ENCODE measurements at regions of chr6 and their contacts with region 1.

Region 1: GRCh38 chr6:4055420-4056041 is 23.4 kb downstream of the FAM217A start:
- DNase-seq: peak in 1 of 3 donors; percentile 47
- ATAC-seq: peak; percentile 81 to 83
- H3K4me3 ChIP-seq: no peak overlapping the region
- H3K27ac ChIP-seq: no peak overlapping the region
- H3K4me1 ChIP-seq: no peaks in the 10 kb centered on the region
- H3K27me3 ChIP-seq: no peaks in the 10 kb centered on the region

Region 2: GRCh38 chr6:3962957-3963303 is 92.6 kb before region 1 on chr6:
- intact Hi-C with region 1: no loop called
- DNase-seq: no peak
- ATAC-seq: no peak
- H3K4me3 ChIP-seq: no peak overlapping the region
- H3K27ac ChIP-seq: no peak overlapping the region
- H3K4me1 ChIP-seq: no peaks in the 10 kb centered on the region
- H3K27me3 ChIP-seq: no peaks in the 10 kb centered on the region

Region 3: GRCh38 chr6:4102687-4103244 is 47.2 kb after region 1 on chr6:
- intact Hi-C with region 1: no loop called
- DNase-seq: no peak
- ATAC-seq: no peak
- H3K4me3 ChIP-seq: no peak overlapping the region
- H3K27ac ChIP-seq: no peak overlapping the region
- H3K4me1 ChIP-seq: no peaks in the 10 kb centered on the region
- H3K27me3 ChIP-seq: no peaks in the 10 kb centered on the region

Region 4: GRCh38 chr6:4115746-4116145 is 60.2 kb after region 1 on chr6:
- intact Hi-C with region 1: loop called in 1 of 4 experiments (anchors 5 kb)
- DNase-seq: no peak
- ATAC-seq: no peak
- H3K4me3 ChIP-seq: no peak overlapping the region
- H3K27ac ChIP-seq: no peak overlapping the region
- H3K4me1 ChIP-seq: no peaks in the 10 kb centered on the region
- H3K27me3 ChIP-seq: no peaks in the 10 kb centered on the region

Region 5: GRCh38 chr6:4125936-4126864 is 70.7 kb after region 1 on chr6:
- intact Hi-C with region 1: no loop called
- DNase-seq: no peak
- ATAC-seq: peak; percentile 47 to 85
- H3K4me3 ChIP-seq: no peak overlapping the region
- H3K27ac ChIP-seq: no peak overlapping the region
- H3K4me1 ChIP-seq: no peaks in the 10 kb centered on the region
- H3K27me3 ChIP-seq: no peaks in the 10 kb centered on the region

Region 6: DNA sequence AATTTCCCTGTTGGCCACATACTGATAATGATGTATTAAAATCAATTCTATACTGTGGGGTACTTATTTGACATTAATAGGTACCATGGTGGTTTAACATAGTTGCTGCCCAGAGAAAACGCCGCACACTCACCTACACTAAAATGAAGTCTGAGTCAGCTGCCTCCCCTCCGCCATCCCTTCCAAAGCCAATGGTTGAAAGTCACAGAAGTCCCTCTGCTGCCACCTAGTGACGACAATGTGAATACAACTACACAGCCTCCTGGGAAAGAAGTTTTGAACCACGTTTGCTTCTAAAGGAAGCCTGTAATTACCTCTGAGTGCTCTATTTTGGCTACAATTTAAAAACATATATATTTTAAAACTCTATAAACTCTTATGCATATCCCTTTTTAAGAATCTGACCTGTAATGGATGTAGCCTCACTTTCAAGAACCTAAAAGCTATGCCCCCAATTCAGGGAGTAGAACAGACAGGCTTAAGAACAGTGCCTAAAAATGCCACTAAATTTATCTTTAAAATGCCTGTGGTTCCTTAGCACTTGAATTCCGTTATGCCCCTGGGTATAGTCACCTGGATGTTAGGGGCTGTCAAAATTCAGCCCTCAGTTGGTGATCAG is 100.4 kb after region 1 on chr6:
- intact Hi-C with region 1: loop called (anchors 5 to 10 kb)
- DNase-seq: peak; percentile 63 to 77 (median 66)
- ATAC-seq: peak; percentile 75 to 86
- H3K4me3 ChIP-seq: no peak overlapping the region
- H3K27ac ChIP-seq: no peak overlapping the region
- H3K4me1 ChIP-seq: no peaks in the 10 kb centered on the region
- H3K27me3 ChIP-seq: no peaks in the 10 kb centered on the region